ENCODE measurements at regions of chr10 and their contacts with region 1.

Region 1: GRCh38 chr10:124152916-124153826 is 59.8 kb upstream of the CHST15 start:
- DNase-seq: no peak
- H3K4me3 ChIP-seq: no peak overlapping the region
- H3K27ac ChIP-seq: peak overlapping the region; percentile 61 to 78 (median 66)
- H3K4me1 ChIP-seq: peaks cover 43 to 57% (median 52%) of the 10 kb centered on the region in 4 donors
- H3K27me3 ChIP-seq: no peaks in the 10 kb centered on the region
- CTCF ChIP-seq: no peak
- EP300 ChIP-seq: peak; percentile 10
- POLR2A ChIP-seq: no peak

Region 2: GRCh38 chr10:124106241-124106879 is 46.8 kb before region 1 on chr10:
- intact Hi-C with region 1: loop called (anchors 5 kb)
- DNase-seq: peak; percentile 96
- H3K4me3 ChIP-seq: peak overlapping the region; percentile 9 to 37 (median 18)
- H3K27ac ChIP-seq: peak overlapping the region; percentile 76 to 87 (median 84)
- H3K4me1 ChIP-seq: peaks cover 11 to 36% (median 34%) of the 10 kb centered on the region in 4 donors
- H3K27me3 ChIP-seq: no peaks in the 10 kb centered on the region
- CTCF ChIP-seq: no peak
- EP300 ChIP-seq: no peak
- POLR2A ChIP-seq: no peak

Region 3: DNA sequence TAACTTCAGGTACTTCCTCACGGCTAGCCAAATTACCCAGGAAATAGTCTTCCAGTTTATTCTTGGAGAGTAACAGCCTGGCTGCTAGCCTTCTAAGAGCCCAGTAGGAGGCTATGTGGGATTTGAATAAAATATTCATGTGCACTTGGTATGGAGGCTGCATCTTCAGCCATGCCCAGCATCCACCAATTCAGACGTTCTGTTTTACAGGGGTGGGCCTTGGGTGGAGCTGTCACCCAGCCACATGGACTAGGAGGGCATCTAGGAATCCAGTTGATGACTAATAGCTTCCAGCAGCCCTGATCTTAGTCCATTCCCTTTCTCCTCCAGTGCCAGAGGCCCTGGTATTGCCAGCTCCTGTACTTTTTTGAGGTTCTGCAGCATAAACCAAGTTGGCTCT is 722.4 kb after region 1 on chr10:
- intact Hi-C with region 1: no loop called
- DNase-seq: no peak
- H3K4me3 ChIP-seq: no peak overlapping the region
- H3K27ac ChIP-seq: no peak overlapping the region
- H3K4me1 ChIP-seq: no peaks in the 10 kb centered on the region
- H3K27me3 ChIP-seq: no peaks in the 10 kb centered on the region
- CTCF ChIP-seq: no peak
- EP300 ChIP-seq: no peak
- POLR2A ChIP-seq: no peak

Measured in esophagus muscularis mucosa (tissue), 4 donors.